ENCODE measurements at regions of chr18 and their contacts with region 1.

Region 1: DNA sequence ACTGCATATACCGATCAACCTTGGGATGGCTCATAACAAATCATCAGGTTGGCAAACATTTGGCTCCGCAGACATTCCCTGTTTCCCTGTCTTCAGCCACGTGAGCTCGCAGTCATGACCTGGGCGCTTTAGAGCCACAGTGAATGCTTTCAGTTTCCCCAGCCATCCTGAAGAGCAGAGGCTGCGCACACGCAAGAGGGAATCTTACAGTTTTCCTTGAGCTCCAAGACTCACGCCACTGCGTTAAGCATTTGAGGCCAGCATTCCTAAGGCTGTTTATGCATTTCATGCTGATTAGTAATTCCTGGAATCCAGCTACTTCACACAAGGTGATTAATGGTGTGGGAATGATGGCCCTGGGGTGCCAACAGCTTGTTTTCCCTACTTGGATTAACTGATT is 95.1 kb downstream of the MTCL1 start:
- DNase-seq: no peak
- H3K4me3 ChIP-seq: no peak overlapping the region
- H3K27ac ChIP-seq: no peak overlapping the region
- H3K4me1 ChIP-seq: no peaks in the 10 kb centered on the region
- H3K27me3 ChIP-seq: no peaks in the 10 kb centered on the region
- CTCF ChIP-seq: no peak
- POLR2A ChIP-seq: no peak

Region 2: DNA sequence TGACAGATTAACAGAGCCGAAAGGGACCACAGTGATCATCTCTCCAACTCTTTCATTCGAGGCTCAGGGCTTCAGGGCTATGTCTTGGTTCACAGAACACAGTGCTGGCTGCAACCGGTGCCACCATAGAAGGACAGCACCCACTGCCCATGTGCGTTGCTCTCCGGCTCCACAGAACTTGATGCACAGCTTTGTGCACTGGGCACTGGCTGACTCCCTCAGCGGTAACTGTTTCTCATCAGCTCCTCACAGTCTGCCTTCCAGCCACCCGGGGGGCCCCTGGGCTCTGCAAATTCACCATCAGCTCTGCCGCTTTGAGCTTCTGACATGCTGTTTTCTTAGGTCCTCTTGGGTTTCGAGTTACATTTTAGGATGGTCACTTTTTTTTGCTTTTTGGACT is 315.5 kb before region 1 on chr18:
- intact Hi-C with region 1: no loop called
- DNase-seq: no peak
- H3K4me3 ChIP-seq: no peak overlapping the region
- H3K27ac ChIP-seq: no peak overlapping the region
- H3K4me1 ChIP-seq: no peaks in the 10 kb centered on the region
- H3K27me3 ChIP-seq: no peaks in the 10 kb centered on the region
- CTCF ChIP-seq: no peak
- POLR2A ChIP-seq: no peak

Region 3: GRCh38 chr18:8559612-8560186 is 240.8 kb before region 1 on chr18:
- intact Hi-C with region 1: no loop called
- DNase-seq: no peak
- H3K4me3 ChIP-seq: no peak overlapping the region
- H3K27ac ChIP-seq: no peak overlapping the region
- H3K4me1 ChIP-seq: no peaks in the 10 kb centered on the region
- H3K27me3 ChIP-seq: no peaks in the 10 kb centered on the region
- CTCF ChIP-seq: no peak
- POLR2A ChIP-seq: no peak

Region 4: GRCh38 chr18:8704361-8705279 is 95.8 kb before region 1 on chr18:
- intact Hi-C with region 1: loop called (anchors 5 kb)
- DNase-seq: peak; percentile 88
- H3K4me3 ChIP-seq: peak overlapping the region; percentile 62 to 63
- H3K27ac ChIP-seq: peak overlapping the region; percentile 88 to 90
- H3K4me1 ChIP-seq: peaks cover 8% of the 10 kb centered on the region
- H3K27me3 ChIP-seq: no peaks in the 10 kb centered on the region
- CTCF ChIP-seq: peak in 1 of 4 experiments; percentile 28
- POLR2A ChIP-seq: peak; percentile 68